Activated CD8-positive, alpha-beta T cell treated with anti-CD3 and anti-CD28 coated beads for 36 hours (primary cell): ENCODE measurements at regions of chr16 and their contacts with region 1.

Region 1: GRCh38 chr16:28309811-28310311 is 17.5 kb downstream of the SBK1 start:
- DNase-seq: peak; percentile 99
- ATAC-seq: peak; percentile 94
- H3K4me3 Mint-ChIP-seq: peak overlapping the region; percentile 55
- H3K27ac Mint-ChIP-seq: peak overlapping the region; percentile 96
- H3K4me1 Mint-ChIP-seq: peaks cover 67% of the 10 kb centered on the region
- H3K27me3 Mint-ChIP-seq: no peaks in the 10 kb centered on the region
- CTCF ChIP-seq: no peak

Region 2: GRCh38 chr16:28188085-28188916 is 121.6 kb before region 1 on chr16:
- CTCF ChIA-PET with region 1: no interaction called
- POLR2A ChIA-PET with region 1: no interaction called
- intact Hi-C with region 1: no loop called
- DNase-seq: no peak
- ATAC-seq: no peak
- H3K4me3 Mint-ChIP-seq: peak overlapping the region; percentile 34
- H3K27ac Mint-ChIP-seq: peak overlapping the region; percentile 93
- H3K4me1 Mint-ChIP-seq: peaks cover 86% of the 10 kb centered on the region
- H3K27me3 Mint-ChIP-seq: no peaks in the 10 kb centered on the region
- CTCF ChIP-seq: no peak

Region 3: DNA sequence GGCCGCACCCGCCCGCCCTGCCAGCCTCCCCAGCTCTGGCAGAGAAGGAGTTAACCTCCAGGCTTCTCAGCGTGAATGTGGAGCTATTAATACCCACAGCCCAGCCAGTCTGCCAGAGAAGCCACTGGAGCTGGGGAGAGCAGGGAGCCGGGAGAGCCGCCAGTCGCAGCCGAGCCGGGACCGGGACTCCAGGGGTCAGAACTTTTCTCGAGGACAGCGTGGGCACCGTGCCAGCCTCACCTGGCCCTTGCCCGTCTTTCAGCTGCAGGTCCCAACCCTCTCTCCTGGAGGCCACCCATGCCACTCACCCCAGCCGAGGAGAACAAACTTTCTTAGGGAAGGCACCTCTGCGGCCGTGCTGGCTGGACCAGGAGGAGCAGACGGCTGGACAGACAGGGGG is 51.3 kb before region 1 on chr16:
- CTCF ChIA-PET with region 1: no interaction called
- POLR2A ChIA-PET with region 1: no interaction called
- intact Hi-C with region 1: loop called (anchors 5 kb)
- DNase-seq: no peak
- ATAC-seq: no peak
- H3K4me3 Mint-ChIP-seq: no peak overlapping the region
- H3K27ac Mint-ChIP-seq: no peak overlapping the region
- H3K4me1 Mint-ChIP-seq: peaks cover 8% of the 10 kb centered on the region
- H3K27me3 Mint-ChIP-seq: no peaks in the 10 kb centered on the region
- CTCF ChIP-seq: no peak

Region 4: GRCh38 chr16:28291873-28292660 is 17.8 kb before region 1 on chr16 and contains the start of gene SBK1:
- CTCF ChIA-PET with region 1: interaction called, 259 read pairs
- POLR2A ChIA-PET with region 1: interaction called, 7 read pairs
- intact Hi-C with region 1: loop called (anchors 1 kb)
- DNase-seq: peak; percentile 80
- ATAC-seq: peak; percentile 92
- H3K4me3 Mint-ChIP-seq: peak within 1 kb of the TSS; percentile 87
- H3K27ac Mint-ChIP-seq: peak within 1 kb of the TSS; percentile 78
- H3K4me1 Mint-ChIP-seq: peaks cover 54% of the 10 kb centered on the region
- H3K27me3 Mint-ChIP-seq: no peaks in the 10 kb centered on the region
- CTCF ChIP-seq: no peak
- total RNA-seq, gene SBK1: 35.3 to 35.9 TPM

Region 5: DNA sequence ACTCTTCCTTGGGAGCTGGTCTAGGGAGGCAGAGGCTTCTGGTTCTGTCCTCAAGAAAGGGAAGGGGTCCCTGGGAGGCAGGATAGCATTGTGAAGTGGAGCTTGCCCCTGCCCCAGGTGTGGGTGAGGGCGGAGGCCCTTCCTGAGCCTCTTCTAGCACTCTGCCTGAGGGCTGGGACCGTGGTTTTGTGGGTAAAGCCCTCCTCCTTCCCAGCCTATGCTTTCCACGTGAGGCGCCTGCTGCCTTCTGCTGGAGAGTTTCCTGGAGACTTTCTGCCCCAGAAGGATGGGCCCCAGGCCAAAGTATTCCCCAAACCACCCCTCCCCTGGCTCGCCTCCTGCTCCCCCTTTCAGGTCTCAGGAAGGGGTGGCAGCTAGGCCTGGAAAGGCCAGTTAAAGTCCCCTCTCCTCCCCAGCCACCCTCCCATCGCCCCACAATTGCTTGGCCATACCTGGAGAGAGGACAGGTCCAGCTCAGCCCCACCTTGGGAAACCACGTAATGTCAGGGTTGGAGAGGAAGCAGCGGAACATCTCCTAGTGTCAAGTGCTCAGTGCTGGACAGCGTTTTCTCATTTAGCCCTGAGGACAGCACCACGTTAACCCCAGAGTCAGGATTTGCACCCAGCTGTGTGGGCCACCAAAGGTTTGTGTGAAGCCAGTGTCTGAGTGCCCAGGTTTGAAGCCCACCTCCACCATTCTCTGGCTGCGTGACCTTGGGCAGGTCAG is 11.9 kb before region 1 on chr16:
- CTCF ChIA-PET with region 1: interaction called, 7 read pairs
- POLR2A ChIA-PET with region 1: interaction called, 30 read pairs
- intact Hi-C with region 1: loop called (anchors 1 kb)
- DNase-seq: peak; percentile 34
- ATAC-seq: peak; percentile 25
- H3K4me3 Mint-ChIP-seq: peak overlapping the region; percentile 42
- H3K27ac Mint-ChIP-seq: peak overlapping the region; percentile 77
- H3K4me1 Mint-ChIP-seq: peaks cover 70% of the 10 kb centered on the region
- H3K27me3 Mint-ChIP-seq: no peaks in the 10 kb centered on the region
- CTCF ChIP-seq: no peak